ENCODE measurements at regions of chr20 and their contacts with region 1.

Region 1: GRCh38 chr20:45289942-45290676 is 16.5 kb upstream of the RBPJL start:
- DNase-seq: peak in 1 of 7 donors; percentile 17
- H3K4me3 ChIP-seq: no peak overlapping the region
- H3K27ac ChIP-seq: no peak overlapping the region
- H3K4me1 ChIP-seq: peaks cover 0 to 9% of the 10 kb centered on the region in 2 donors
- H3K27me3 ChIP-seq: peaks cover 11% of the 10 kb centered on the region
- CTCF ChIP-seq: no peak
- POLR2A ChIP-seq: no peak

Region 2: DNA sequence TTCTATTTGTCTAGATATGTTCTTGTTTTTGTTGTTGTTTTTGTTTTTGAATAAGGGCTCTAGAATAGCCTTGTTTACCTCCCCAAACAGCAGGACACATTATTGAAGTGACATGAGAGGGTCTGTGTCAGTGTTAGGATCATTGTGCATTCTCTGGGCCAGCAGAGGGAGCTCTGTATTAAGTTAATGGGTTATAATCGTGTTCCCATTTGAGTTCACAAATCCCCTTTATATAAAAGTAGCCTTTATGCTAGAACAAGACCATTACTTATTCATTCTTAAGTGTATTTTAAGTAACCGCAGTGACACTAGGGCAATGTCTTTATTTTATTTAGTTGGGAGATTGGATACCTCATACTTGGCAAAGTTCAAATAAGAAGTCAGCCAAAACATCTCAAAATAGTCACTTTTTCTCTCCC is 279.0 kb before region 1 on chr20:
- intact Hi-C with region 1: loop called in 1 of 2 experiments (anchors 5 kb)
- DNase-seq: peak; percentile 38 to 82 (median 59)
- H3K4me3 ChIP-seq: no peak overlapping the region
- H3K27ac ChIP-seq: no peak overlapping the region
- H3K4me1 ChIP-seq: peaks cover 8 to 15% of the 10 kb centered on the region in 2 donors
- H3K27me3 ChIP-seq: no peaks in the 10 kb centered on the region
- CTCF ChIP-seq: peak; percentile 54 to 79 (median 68)
- POLR2A ChIP-seq: no peak

Region 3: DNA sequence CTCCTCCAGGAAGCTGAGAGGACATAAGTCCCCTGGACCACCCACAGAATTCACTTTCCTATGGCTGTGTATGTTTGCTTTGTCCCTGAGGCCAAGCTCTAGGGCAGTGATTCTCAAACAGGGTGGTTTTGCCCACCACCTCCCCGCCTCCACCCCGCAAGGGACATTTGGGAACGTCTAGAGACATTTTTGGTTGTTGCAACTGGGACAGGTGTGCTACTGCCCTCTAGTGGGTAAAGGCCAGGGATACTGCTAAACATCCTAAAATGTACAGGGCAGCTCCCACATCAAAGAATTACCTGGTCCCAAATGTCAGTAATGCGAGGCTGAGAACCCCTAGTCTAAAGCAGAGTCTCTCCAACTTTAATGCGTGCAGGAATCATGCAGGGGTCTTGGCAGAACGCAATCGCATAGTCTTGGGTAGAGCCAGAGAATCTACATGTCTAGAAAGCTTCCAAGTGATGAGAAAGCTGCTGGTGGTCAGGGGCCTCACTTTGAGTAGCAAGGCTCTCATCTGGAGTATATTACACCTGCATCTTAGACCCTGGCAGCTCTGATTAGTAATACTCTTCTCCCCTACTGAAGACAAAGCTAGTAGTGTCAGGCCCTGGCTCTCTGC is 194.2 kb before region 1 on chr20:
- intact Hi-C with region 1: loop called (anchors 5 to 10 kb)
- DNase-seq: peak; percentile 55 to 79 (median 70)
- H3K4me3 ChIP-seq: no peak overlapping the region
- H3K27ac ChIP-seq: no peak overlapping the region
- H3K4me1 ChIP-seq: peaks cover 4 to 16% of the 10 kb centered on the region in 2 donors
- H3K27me3 ChIP-seq: peaks cover 32% of the 10 kb centered on the region
- CTCF ChIP-seq: peak; percentile 58 to 77 (median 72)
- POLR2A ChIP-seq: no peak

Region 4: DNA sequence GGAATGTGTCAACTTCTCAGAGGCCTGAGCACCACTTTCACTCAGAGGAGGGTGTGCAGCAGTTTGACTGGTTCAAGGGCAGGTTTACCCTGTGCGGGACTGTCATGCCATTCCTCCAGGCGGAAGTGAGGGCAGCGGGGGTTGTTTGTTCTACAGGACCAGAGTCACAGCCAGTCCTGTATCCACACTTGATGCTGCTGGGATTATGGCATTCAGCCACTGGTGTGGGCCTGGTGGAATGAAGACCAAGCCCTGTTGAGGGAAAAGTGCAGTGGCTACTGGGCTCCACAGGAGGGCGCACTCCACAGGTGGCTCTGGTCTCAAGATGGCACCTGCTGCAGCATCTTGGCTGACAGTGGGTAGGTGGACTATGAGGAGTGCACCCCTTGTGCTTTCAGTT is 54.1 kb before region 1 on chr20:
- intact Hi-C with region 1: no loop called
- DNase-seq: no peak
- H3K4me3 ChIP-seq: no peak overlapping the region
- H3K27ac ChIP-seq: no peak overlapping the region
- H3K4me1 ChIP-seq: no peaks in the 10 kb centered on the region
- H3K27me3 ChIP-seq: peaks cover 19% of the 10 kb centered on the region
- CTCF ChIP-seq: peak in 1 of 6 experiments; percentile 13
- POLR2A ChIP-seq: no peak

Region 5: DNA sequence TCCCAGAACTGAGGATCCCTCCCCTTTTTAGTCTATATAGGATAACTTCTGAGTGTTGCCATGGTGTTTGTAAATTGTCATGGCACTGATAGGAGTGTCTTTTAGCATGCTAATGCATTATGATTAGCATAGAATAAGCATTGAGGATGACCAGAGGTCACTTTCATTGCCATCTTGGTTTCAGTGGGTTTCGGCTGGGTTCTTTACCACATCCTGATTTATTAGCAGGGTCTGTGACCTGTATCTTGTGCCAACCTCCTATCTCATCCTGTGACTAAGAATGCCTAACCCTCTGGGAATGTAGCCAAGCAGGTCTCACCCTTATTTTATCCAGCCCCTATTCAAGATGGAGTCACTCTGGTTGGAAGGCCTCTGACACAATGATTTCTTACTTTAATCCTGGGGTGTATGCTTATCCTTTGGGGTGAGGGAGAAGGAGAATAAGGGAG is 199.0 kb after region 1 on chr20:
- intact Hi-C with region 1: no loop called
- DNase-seq: peak in 3 of 7 donors; percentile 12 to 35 (median 30)
- H3K4me3 ChIP-seq: no peak overlapping the region
- H3K27ac ChIP-seq: no peak overlapping the region
- H3K4me1 ChIP-seq: no peaks in the 10 kb centered on the region
- H3K27me3 ChIP-seq: no peaks in the 10 kb centered on the region
- CTCF ChIP-seq: no peak
- POLR2A ChIP-seq: no peak

Measured in adrenal gland (tissue), 19 donors.